ENCODE measurements at regions of chr17 and their contacts with region 1.

Region 1: DNA sequence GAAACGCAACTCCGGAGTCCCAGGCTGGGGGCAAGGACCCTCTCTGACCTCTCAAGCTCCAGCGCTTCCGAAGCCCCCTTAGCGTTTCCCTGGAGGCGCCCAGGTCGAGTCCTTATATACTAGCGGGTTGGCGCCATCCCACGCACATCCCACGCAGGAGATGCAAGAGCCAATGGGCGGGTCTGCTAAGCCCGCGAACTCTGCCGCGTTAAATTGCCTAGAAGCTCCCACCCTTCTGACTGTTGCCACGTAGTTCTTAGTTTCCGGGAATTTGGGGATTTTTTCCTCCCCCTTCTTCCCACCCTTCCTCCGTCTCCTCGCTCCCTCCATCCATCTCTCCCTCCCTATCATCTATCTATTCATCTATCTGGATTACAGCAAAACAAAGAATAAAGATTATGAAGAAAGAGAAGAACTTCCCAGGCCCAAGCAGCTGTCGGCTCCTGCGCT is at the start of gene SLFN11:
- DNase-seq: peak; percentile 63 to 95 (median 78)
- ATAC-seq: peak; percentile 88
- H3K4me3 ChIP-seq: peak within 1 kb of the TSS; percentile 85 to 95
- H3K4me3 Mint-ChIP-seq: peak within 1 kb of the TSS; percentile 99
- H3K27ac ChIP-seq: peak within 1 kb of the TSS; percentile 83 to 99
- H3K27ac Mint-ChIP-seq: peak within 1 kb of the TSS; percentile 98
- H3K4me1 ChIP-seq: peaks cover 19% of the 10 kb centered on the region
- H3K4me1 Mint-ChIP-seq: peaks cover 52% of the 10 kb centered on the region
- H3K27me3 ChIP-seq: no peaks in the 10 kb centered on the region
- H3K27me3 Mint-ChIP-seq: no peaks in the 10 kb centered on the region
- CTCF ChIP-seq: no peak
- total RNA-seq, gene SLFN11: 25.6 to 27.2 TPM

Region 2: DNA sequence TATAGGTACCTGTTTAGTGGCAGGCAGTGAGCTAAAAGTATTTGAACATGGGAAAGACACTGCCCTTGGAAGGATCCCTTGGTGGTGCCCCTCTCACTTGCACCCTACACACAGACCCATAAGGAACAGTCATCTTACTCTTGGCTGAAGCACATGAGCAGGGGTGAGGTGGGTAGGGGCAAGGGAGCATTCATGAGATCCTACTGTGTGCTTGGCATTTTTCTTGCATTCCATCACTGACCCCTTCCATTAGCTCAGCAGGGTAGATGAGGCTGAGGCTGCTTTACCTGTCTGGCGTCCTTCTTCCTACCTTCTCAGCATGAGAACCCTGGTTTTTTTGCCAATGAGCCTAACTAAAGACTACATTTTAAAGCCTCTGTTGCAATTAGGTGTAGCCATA is 460.6 kb before region 1 on chr17:
- CTCF ChIA-PET with region 1: no interaction called
- POLR2A ChIA-PET with region 1: no interaction called
- intact Hi-C with region 1: no loop called
- DNase-seq: no peak
- ATAC-seq: no peak
- H3K4me3 ChIP-seq: no peak overlapping the region
- H3K4me3 Mint-ChIP-seq: no peak overlapping the region
- H3K27ac ChIP-seq: no peak overlapping the region
- H3K27ac Mint-ChIP-seq: no peak overlapping the region
- H3K4me1 ChIP-seq: no peaks in the 10 kb centered on the region
- H3K4me1 Mint-ChIP-seq: no peaks in the 10 kb centered on the region
- H3K27me3 ChIP-seq: no peaks in the 10 kb centered on the region
- H3K27me3 Mint-ChIP-seq: no peaks in the 10 kb centered on the region
- CTCF ChIP-seq: no peak

Region 3: DNA sequence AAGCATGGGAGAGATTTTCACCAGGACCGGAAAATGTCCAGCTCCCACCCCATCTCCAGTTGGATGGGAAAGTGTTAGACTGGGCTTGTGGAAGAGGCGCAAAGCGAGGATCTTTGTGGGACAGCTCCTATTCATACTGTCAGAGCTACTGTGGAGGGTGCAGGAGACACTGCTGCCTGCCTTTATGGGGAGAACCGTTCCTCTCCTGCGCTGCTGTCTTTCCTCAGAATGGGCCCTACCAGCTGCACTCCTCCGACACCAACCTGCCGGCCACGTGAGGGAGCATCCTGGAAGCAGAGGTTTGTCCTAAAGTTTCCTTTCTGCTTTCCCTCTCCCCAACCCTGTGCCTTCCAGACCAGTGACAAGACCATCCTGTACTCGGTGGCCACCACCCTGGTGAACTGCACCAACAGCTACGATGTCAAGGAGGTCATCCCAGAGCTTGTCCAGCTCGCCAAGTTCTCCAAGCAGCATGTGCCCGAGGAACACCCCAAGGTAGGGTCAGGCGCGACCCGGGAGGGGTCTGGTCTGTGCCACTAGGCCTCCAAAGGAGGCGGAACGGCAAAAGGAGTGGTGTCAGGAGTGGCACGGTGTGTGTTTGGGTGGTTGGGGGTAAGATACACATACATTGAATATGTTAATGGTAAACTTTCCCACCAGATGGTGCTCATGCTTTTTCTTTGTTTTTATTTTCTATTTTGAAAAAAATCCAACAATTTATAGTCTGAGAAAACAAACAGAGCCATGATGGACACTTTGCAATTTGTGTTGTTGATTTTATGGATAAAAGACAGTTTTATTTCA is 202.4 kb before region 1 on chr17:
- CTCF ChIA-PET with region 1: interaction called, 4 read pairs
- POLR2A ChIA-PET with region 1: no interaction called
- intact Hi-C with region 1: loop called in 1 of 2 experiments (anchors 5 kb)
- DNase-seq: peak in 5 of 9 experiments; percentile 31 to 70 (median 62)
- ATAC-seq: peak; percentile 79
- H3K4me3 ChIP-seq: peak overlapping the region; percentile 10 to 31
- H3K4me3 Mint-ChIP-seq: peak overlapping the region; percentile 57
- H3K27ac ChIP-seq: peak overlapping the region in 1 of 2 experiments; percentile 51
- H3K27ac Mint-ChIP-seq: peak overlapping the region; percentile 90
- H3K4me1 ChIP-seq: peaks cover 37% of the 10 kb centered on the region
- H3K4me1 Mint-ChIP-seq: peaks cover 46% of the 10 kb centered on the region
- H3K27me3 ChIP-seq: no peaks in the 10 kb centered on the region
- H3K27me3 Mint-ChIP-seq: no peaks in the 10 kb centered on the region
- CTCF ChIP-seq: peak; percentile 69

Region 4: GRCh38 chr17:35345926-35346771 is 27.4 kb before region 1 on chr17:
- CTCF ChIA-PET with region 1: no interaction called
- POLR2A ChIA-PET with region 1: interaction called, 4 read pairs
- intact Hi-C with region 1: loop called in 1 of 2 experiments (anchors 2 kb)
- DNase-seq: peak in 7 of 9 experiments; percentile 15 to 70 (median 36)
- ATAC-seq: peak; percentile 63
- H3K4me3 ChIP-seq: peak overlapping the region; percentile 51 to 62
- H3K4me3 Mint-ChIP-seq: peak overlapping the region; percentile 92
- H3K27ac ChIP-seq: peak overlapping the region in 1 of 2 experiments; percentile 54
- H3K27ac Mint-ChIP-seq: peak overlapping the region; percentile 70
- H3K4me1 ChIP-seq: peaks cover 28% of the 10 kb centered on the region
- H3K4me1 Mint-ChIP-seq: peaks cover 50% of the 10 kb centered on the region
- H3K27me3 ChIP-seq: no peaks in the 10 kb centered on the region
- H3K27me3 Mint-ChIP-seq: no peaks in the 10 kb centered on the region
- CTCF ChIP-seq: no peak

Region 5: GRCh38 chr17:35498448-35499178 is 125.1 kb after region 1 on chr17:
- CTCF ChIA-PET with region 1: no interaction called
- POLR2A ChIA-PET with region 1: no interaction called
- intact Hi-C with region 1: no loop called
- DNase-seq: no peak
- ATAC-seq: no peak
- H3K4me3 ChIP-seq: no peak overlapping the region
- H3K4me3 Mint-ChIP-seq: peak overlapping the region; percentile 65
- H3K27ac ChIP-seq: no peak overlapping the region
- H3K27ac Mint-ChIP-seq: peak overlapping the region; percentile 85
- H3K4me1 ChIP-seq: peaks cover 44% of the 10 kb centered on the region
- H3K4me1 Mint-ChIP-seq: peaks cover 80% of the 10 kb centered on the region
- H3K27me3 ChIP-seq: no peaks in the 10 kb centered on the region
- H3K27me3 Mint-ChIP-seq: no peaks in the 10 kb centered on the region
- CTCF ChIP-seq: no peak

Region 6: GRCh38 chr17:35752945-35753764 is 379.6 kb after region 1 on chr17 and contains the start of gene GAS2L2:
- CTCF ChIA-PET with region 1: no interaction called
- POLR2A ChIA-PET with region 1: no interaction called
- intact Hi-C with region 1: no loop called
- DNase-seq: no peak
- ATAC-seq: no peak
- H3K4me3 ChIP-seq: no peak within 1 kb of the TSS
- H3K4me3 Mint-ChIP-seq: no peak within 1 kb of the TSS
- H3K27ac ChIP-seq: no peak within 1 kb of the TSS
- H3K27ac Mint-ChIP-seq: no peak within 1 kb of the TSS
- H3K4me1 ChIP-seq: peaks cover 7% of the 10 kb centered on the region
- H3K4me1 Mint-ChIP-seq: peaks cover 4% of the 10 kb centered on the region
- H3K27me3 ChIP-seq: peaks cover 9 to 10% of the 10 kb centered on the region in 2 experiments
- H3K27me3 Mint-ChIP-seq: peaks cover 35% of the 10 kb centered on the region
- CTCF ChIP-seq: no peak
- total RNA-seq, gene GAS2L2: 0.17 to 0.27 TPM

Measured in CD8-positive, alpha-beta T cell (primary cell).